CD8-positive, alpha-beta memory T cell (primary cell): ENCODE measurements at regions of chr9 and their contacts with region 1.

Region 1: GRCh38 chr9:124040935-124041816 is 29.6 kb downstream of the LHX2 start:
- DNase-seq: peak in 4 of 5 donors; percentile 22 to 29 (median 23)
- H3K4me3 ChIP-seq: no peak overlapping the region
- H3K4me3 Mint-ChIP-seq: peak overlapping the region in 6 of 7 donors; percentile 43 to 70 (median 54)
- H3K27ac ChIP-seq: no peak overlapping the region
- H3K27ac Mint-ChIP-seq: no peak overlapping the region
- H3K4me1 ChIP-seq: no peaks in the 10 kb centered on the region
- H3K4me1 Mint-ChIP-seq: peaks cover 8 to 14% (median 9%) of the 10 kb centered on the region in 3 donors
- H3K27me3 ChIP-seq: peaks cover 25% of the 10 kb centered on the region
- H3K27me3 Mint-ChIP-seq: peaks cover 44 to 75% of the 10 kb centered on the region in 2 donors

Region 2: GRCh38 chr9:123544007-123544827 is 497.0 kb before region 1 on chr9:
- CTCF ChIA-PET with region 1: interaction called, 21 read pairs
- POLR2A ChIA-PET with region 1: no interaction called
- DNase-seq: no peak
- H3K4me3 ChIP-seq: no peak overlapping the region
- H3K4me3 Mint-ChIP-seq: no peak overlapping the region
- H3K27ac ChIP-seq: no peak overlapping the region
- H3K27ac Mint-ChIP-seq: no peak overlapping the region
- H3K4me1 ChIP-seq: no peaks in the 10 kb centered on the region
- H3K4me1 Mint-ChIP-seq: no peaks in the 10 kb centered on the region
- H3K27me3 ChIP-seq: no peaks in the 10 kb centered on the region
- H3K27me3 Mint-ChIP-seq: no peaks in the 10 kb centered on the region

Region 3: GRCh38 chr9:124074729-124075128 is 33.6 kb after region 1 on chr9:
- CTCF ChIA-PET with region 1: no interaction called
- POLR2A ChIA-PET with region 1: no interaction called
- DNase-seq: no peak
- H3K4me3 ChIP-seq: no peak overlapping the region
- H3K4me3 Mint-ChIP-seq: no peak overlapping the region
- H3K27ac ChIP-seq: no peak overlapping the region
- H3K27ac Mint-ChIP-seq: no peak overlapping the region
- H3K4me1 ChIP-seq: no peaks in the 10 kb centered on the region
- H3K4me1 Mint-ChIP-seq: no peaks in the 10 kb centered on the region
- H3K27me3 ChIP-seq: no peaks in the 10 kb centered on the region
- H3K27me3 Mint-ChIP-seq: peaks cover 13 to 53% of the 10 kb centered on the region in 2 donors